Adrenal gland (tissue), 19 donors: ENCODE measurements at regions of chr18 and their contacts with region 1.

Region 1: GRCh38 chr18:61502472-61502871 is 169.2 kb downstream of the CDH20 start:
- DNase-seq: peak; percentile 26 to 67 (median 45)
- H3K4me3 ChIP-seq: no peak overlapping the region
- H3K27ac ChIP-seq: no peak overlapping the region
- H3K4me1 ChIP-seq: no peaks in the 10 kb centered on the region
- H3K27me3 ChIP-seq: peaks cover 7% of the 10 kb centered on the region
- CTCF ChIP-seq: peak; percentile 30 to 72 (median 67)
- POLR2A ChIP-seq: no peak

Region 2: DNA sequence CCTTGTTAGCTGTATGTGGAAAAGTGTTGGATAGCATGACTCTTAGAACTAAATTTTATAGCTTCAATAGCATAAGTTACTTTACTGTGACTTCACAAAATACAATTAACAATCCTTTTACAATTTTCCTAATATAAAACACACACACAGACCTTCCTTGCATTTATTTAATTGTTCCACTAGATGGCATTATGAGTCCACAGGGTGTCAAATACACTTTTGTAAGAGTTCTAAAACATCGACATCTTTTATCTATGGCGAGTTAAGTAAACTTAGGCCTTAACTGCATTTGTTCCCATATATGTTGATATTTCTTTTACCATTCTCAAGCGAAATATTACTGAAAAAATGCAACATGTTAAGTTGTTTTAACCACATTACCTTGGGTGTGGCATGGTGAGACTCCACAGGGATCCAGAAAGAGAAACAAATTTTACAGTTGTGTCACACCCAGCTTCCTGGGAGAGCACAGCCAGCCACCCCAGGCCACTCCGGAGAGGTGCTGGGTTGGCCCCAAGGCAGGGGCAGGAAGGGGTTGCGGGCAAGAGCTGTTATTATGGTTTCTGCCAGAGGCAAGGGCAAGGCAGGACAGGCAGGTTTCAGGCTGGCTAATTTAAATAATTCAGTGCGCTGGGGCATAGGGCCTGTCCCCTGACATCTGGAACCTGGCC is 817.5 kb before region 1 on chr18:
- intact Hi-C with region 1: loop called in 1 of 2 experiments (anchors 10 kb)
- DNase-seq: no peak
- H3K4me3 ChIP-seq: no peak overlapping the region
- H3K27ac ChIP-seq: no peak overlapping the region
- H3K4me1 ChIP-seq: no peaks in the 10 kb centered on the region
- H3K27me3 ChIP-seq: no peaks in the 10 kb centered on the region
- CTCF ChIP-seq: peak; percentile 31 to 66 (median 54)
- POLR2A ChIP-seq: no peak

Region 3: GRCh38 chr18:61322265-61322873 is 180.1 kb before region 1 on chr18:
- intact Hi-C with region 1: loop called (anchors 10 kb)
- DNase-seq: peak; percentile 42 to 68 (median 55)
- H3K4me3 ChIP-seq: no peak overlapping the region
- H3K27ac ChIP-seq: no peak overlapping the region
- H3K4me1 ChIP-seq: no peaks in the 10 kb centered on the region
- H3K27me3 ChIP-seq: no peaks in the 10 kb centered on the region
- CTCF ChIP-seq: peak; percentile 52 to 73 (median 66)
- POLR2A ChIP-seq: no peak